ENCODE measurements at regions of chr20 and their contacts with region 1.

Region 1: GRCh38 chr20:32779500-32780211 is 17.5 kb downstream of the DNMT3B start:
- DNase-seq: no peak
- H3K4me3 ChIP-seq: no peak overlapping the region
- H3K27ac ChIP-seq: no peak overlapping the region
- H3K4me1 ChIP-seq: no peaks in the 10 kb centered on the region
- H3K27me3 ChIP-seq: no peaks in the 10 kb centered on the region
- CTCF ChIP-seq: no peak

Region 2: GRCh38 chr20:32521780-32522525 is 257.7 kb before region 1 on chr20:
- CTCF ChIA-PET with region 1: no interaction called
- POLR2A ChIA-PET with region 1: interaction called, 3 read pairs
- intact Hi-C with region 1: loop called (anchors 5 kb)
- DNase-seq: peak; percentile 41 to 73
- H3K4me3 ChIP-seq: no peak overlapping the region
- H3K27ac ChIP-seq: no peak overlapping the region
- H3K4me1 ChIP-seq: peaks cover 20% of the 10 kb centered on the region
- H3K27me3 ChIP-seq: no peaks in the 10 kb centered on the region
- CTCF ChIP-seq: peak; percentile 88

Region 3: GRCh38 chr20:32674362-32674789 is 105.3 kb before region 1 on chr20:
- CTCF ChIA-PET with region 1: interaction called, 46 read pairs
- POLR2A ChIA-PET with region 1: interaction called, 4 read pairs
- intact Hi-C with region 1: loop called (anchors 1 kb)
- DNase-seq: peak; percentile 58 to 73
- H3K4me3 ChIP-seq: no peak overlapping the region
- H3K27ac ChIP-seq: no peak overlapping the region
- H3K4me1 ChIP-seq: peaks cover 10% of the 10 kb centered on the region
- H3K27me3 ChIP-seq: no peaks in the 10 kb centered on the region
- CTCF ChIP-seq: peak; percentile 90

Region 4: GRCh38 chr20:32727683-32728082 is 52.0 kb before region 1 on chr20:
- CTCF ChIA-PET with region 1: interaction called, 4 read pairs
- POLR2A ChIA-PET with region 1: interaction called, 27 read pairs
- intact Hi-C with region 1: no loop called
- DNase-seq: no peak
- H3K4me3 ChIP-seq: no peak overlapping the region
- H3K27ac ChIP-seq: no peak overlapping the region
- H3K4me1 ChIP-seq: peaks cover 28% of the 10 kb centered on the region
- H3K27me3 ChIP-seq: no peaks in the 10 kb centered on the region
- CTCF ChIP-seq: no peak

Region 5: GRCh38 chr20:32819992-32820710 is 40.5 kb after region 1 on chr20:
- CTCF ChIA-PET with region 1: no interaction called
- POLR2A ChIA-PET with region 1: interaction called, 13 read pairs
- intact Hi-C with region 1: no loop called
- DNase-seq: no peak
- H3K4me3 ChIP-seq: peak overlapping the region; percentile 76
- H3K27ac ChIP-seq: peak overlapping the region; percentile 50; the same call in 1 of the 2 replicates
- H3K4me1 ChIP-seq: peaks cover 34% of the 10 kb centered on the region
- H3K27me3 ChIP-seq: no peaks in the 10 kb centered on the region
- CTCF ChIP-seq: no peak

Region 6: DNA sequence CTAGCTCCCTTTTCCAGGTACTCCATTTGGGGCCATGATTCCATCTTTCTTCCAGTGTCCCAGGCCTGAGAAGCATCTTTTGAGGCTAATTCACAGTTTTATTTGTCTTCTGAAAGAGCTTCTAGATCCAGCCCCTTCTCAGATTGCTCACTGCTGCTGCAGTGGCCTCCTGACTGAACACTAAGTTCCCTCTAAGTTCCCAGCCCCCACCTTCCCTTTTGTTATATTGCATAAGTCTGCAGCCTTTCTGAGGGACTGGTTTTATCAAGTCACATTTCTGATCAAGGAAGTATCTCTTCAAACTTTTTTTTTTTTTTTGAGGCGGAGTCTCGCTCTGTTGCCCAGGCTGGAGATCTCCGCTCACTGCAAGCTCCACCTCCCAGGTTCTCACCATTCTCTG is 50.8 kb after region 1 on chr20:
- CTCF ChIA-PET with region 1: no interaction called
- POLR2A ChIA-PET with region 1: interaction called, 21 read pairs
- intact Hi-C with region 1: no loop called
- DNase-seq: no peak
- H3K4me3 ChIP-seq: no peak overlapping the region
- H3K27ac ChIP-seq: no peak overlapping the region
- H3K4me1 ChIP-seq: no peaks in the 10 kb centered on the region
- H3K27me3 ChIP-seq: no peaks in the 10 kb centered on the region
- CTCF ChIP-seq: no peak

Measured in PC-9 (cell line).